Dorsolateral prefrontal cortex (tissue), 120 donors: ENCODE measurements at regions of chr22 and their contacts with region 1.

Region 1: DNA sequence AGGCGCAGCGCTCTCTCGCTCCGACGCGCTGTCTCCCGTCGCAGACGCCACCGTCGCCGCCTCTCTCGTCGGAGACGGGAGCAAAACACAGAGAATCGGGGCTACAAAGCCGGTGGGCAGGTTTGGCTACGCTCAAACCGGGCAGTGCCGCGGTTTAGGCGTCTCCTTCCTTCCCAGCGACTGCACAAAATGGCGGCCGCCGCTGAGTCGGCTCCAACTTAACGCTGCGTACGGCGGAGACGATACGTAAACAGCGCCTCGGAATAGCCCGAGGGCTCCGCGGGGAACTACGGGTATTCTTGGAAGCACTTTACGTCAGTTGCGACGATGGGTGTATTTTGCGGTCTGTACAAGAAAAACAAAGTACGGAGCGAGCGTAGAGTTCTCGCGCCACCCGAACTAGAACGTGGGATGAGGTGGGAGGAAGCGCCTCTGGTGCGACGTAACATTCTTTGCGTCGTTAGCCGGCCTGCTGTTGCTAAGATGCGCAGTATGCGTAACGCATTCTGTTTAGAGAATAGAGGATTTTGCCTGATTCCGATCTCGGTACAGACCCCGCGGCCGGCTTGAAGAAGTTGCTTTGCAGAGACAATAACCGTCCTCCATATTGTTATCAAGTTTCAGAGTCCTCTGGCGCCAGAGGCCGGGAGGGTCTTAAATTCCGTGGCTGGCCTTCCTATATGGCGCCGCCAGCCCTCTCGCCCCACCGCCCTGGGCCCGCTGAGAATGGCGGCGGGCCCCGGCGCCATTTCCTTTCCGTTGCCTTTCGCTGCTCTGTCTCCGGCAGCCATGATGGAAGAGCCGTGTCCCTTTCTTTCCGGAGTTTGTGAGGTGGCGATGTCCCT is at the start of gene DDX17:
- DNase-seq: peak; percentile 87 to 98 (median 96)
- H3K4me3 ChIP-seq: peak within 1 kb of the TSS; percentile 55 to 98 (median 89)
- H3K27ac ChIP-seq: peak within 1 kb of the TSS; percentile 98 to 100 (median 100)
- H3K27me3 ChIP-seq: no peaks in the 10 kb centered on the region
- CTCF ChIP-seq: peak in 13 of 56 donors; percentile 4 to 46 (median 17)
- total RNA-seq, gene DDX17: 359 to 670 (median 471) TPM

Region 2: DNA sequence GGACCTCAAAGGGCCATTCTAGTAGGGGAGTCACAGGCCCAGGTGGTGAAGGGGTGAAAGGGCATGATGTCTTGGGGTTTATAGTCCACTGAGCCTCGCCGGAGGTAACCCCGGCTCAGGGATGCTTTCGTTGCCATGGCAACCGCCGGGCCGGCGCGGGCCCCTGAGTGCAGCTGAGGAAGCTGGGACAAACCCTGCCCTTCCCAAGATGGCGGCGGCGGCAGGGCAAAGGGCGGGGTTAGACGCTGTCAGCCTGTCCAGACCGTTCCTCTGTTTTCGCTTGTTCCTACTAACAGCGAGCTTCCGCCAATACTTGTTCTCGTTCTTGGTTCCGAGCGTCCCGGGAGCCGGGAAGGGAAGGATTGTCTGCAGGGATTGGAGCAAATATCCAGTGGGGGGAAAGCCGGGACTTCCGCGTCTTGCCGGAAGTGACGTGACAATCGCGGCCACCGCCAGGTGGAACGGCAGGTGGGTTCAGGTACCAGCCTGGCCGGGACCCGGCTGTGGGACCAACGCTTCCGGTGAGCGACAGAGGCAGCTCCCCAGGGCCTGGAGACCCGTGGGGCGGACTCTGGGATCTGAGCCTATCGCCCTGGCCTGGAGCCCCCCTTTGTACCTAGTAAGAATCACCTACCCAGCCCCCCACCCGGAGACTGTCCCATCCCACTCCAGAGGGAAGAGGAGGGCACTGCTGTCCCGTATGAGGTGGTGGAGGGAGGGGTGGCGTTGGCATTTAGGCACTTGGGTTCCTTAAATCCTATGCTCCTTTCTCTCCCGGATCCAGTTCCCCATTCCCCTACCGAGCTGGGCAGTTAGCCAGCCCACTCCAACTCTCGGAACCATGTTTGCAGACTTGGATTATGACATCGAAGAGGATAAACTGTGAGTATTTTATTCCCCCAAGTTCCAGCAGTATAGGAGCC is 449.1 kb before region 1 on chr22 and contains the start of gene PICK1:
- intact Hi-C with region 1: loop called in 1 of 2 experiments (anchors 5 kb)
- DNase-seq: peak; percentile 81 to 99 (median 96)
- H3K4me3 ChIP-seq: peak within 1 kb of the TSS; percentile 44 to 90 (median 77)
- H3K27ac ChIP-seq: peak within 1 kb of the TSS; percentile 60 to 100 (median 96)
- H3K27me3 ChIP-seq: no peaks in the 10 kb centered on the region
- CTCF ChIP-seq: peak in 29 of 56 donors; percentile 11 to 49 (median 28)
- total RNA-seq, gene PICK1: 45.5 to 186 (median 75.9) TPM

Region 3: GRCh38 chr22:38403812-38404211 is 102.5 kb before region 1 on chr22:
- intact Hi-C with region 1: loop called in 1 of 2 experiments (anchors 5 kb)
- DNase-seq: peak in 2 of 10 donors; percentile 46 to 47
- H3K4me3 ChIP-seq: peak overlapping the region in 6 of 59 donors; percentile 1 to 24 (median 16)
- H3K27ac ChIP-seq: no peak overlapping the region
- H3K27me3 ChIP-seq: no peaks in the 10 kb centered on the region
- CTCF ChIP-seq: no peak

Region 4: DNA sequence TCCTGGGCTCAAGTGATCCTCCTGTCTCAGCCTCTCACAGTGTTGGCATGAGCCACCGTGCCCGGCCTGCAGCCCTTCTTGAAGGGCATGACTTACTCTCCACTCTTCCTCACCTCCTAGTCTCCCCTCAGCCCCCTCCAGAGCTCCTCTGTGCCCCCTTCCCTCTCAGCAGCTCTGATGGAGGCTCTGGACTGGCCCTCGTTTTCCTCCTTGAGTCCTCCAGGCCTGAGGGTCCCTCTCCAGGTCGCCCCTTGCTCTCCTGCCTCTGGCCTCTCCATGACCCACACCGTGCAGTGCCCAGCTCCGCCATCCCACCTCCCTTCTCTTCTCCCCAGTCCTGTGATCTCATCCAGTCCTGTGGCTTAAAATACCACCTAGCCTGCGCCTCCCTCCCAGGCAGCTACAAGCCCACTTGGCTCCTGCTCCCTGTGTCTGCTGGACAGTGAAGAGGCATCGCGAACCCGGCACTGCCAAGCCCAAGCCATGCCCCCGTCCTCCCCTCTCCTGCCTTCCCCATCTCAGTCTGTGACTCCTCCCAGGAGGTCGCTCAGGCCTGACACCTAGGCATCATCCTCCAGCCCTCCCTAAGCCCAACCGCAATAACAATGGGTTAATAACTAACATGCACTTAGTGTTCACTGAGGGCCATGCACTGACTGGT is 63.2 kb before region 1 on chr22:
- intact Hi-C with region 1: no loop called
- DNase-seq: no peak
- H3K4me3 ChIP-seq: no peak overlapping the region
- H3K27ac ChIP-seq: peak overlapping the region in 46 of 59 donors; percentile 9 to 77 (median 57)
- H3K27me3 ChIP-seq: no peaks in the 10 kb centered on the region
- CTCF ChIP-seq: no peak

Region 5: GRCh38 chr22:38554281-38554680 is 47.9 kb after region 1 on chr22:
- intact Hi-C with region 1: no loop called
- DNase-seq: no peak
- H3K4me3 ChIP-seq: no peak overlapping the region
- H3K27ac ChIP-seq: no peak overlapping the region
- H3K27me3 ChIP-seq: no peaks in the 10 kb centered on the region
- CTCF ChIP-seq: no peak

Region 6: GRCh38 chr22:38656256-38657044 is 150.1 kb after region 1 on chr22 and contains the starts of genes CBY1 and FAM227A:
- intact Hi-C with region 1: loop called (anchors 5 to 10 kb)
- DNase-seq: peak; percentile 81 to 94 (median 90)
- H3K4me3 ChIP-seq: peak within 1 kb of the TSS; percentile 73 to 100 (median 95)
- H3K27ac ChIP-seq: peak within 1 kb of the TSS; percentile 89 to 100 (median 98)
- H3K27me3 ChIP-seq: no peaks in the 10 kb centered on the region
- CTCF ChIP-seq: peak in 12 of 56 donors; percentile 5 to 42 (median 10)
- total RNA-seq, gene CBY1: 19.3 to 46.5 (median 29.4) TPM
- total RNA-seq, gene FAM227A: 2.2 to 24.9 (median 6.9) TPM

Region 7: DNA sequence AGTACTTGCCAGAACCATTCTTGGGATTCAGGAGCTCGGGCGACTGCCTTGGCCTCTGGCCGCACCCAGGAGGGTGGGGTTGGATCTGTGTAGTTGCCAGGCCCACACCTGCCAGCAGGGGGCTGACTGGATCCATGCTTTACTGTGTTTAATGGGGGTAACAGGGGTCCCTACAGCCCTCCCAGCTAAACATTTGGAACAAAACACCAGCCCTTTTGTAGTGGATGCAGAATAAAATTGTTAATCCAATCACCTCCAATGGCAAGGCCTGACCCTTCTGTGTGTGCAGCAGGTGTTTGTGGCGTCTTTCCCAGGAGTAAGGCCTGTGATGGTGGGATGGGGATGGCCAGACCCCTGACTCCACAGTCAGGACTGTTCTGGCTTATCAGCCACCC is 227.0 kb after region 1 on chr22:
- intact Hi-C with region 1: no loop called
- DNase-seq: peak in 5 of 10 donors; percentile 60 to 73 (median 71)
- H3K4me3 ChIP-seq: peak overlapping the region in 1 of 59 donors; percentile 14
- H3K27ac ChIP-seq: peak overlapping the region; percentile 89 to 100 (median 98)
- H3K27me3 ChIP-seq: no peaks in the 10 kb centered on the region
- CTCF ChIP-seq: peak; percentile 41 to 79 (median 65)